ENCODE measurements at regions of chr16 and their contacts with region 1.

Region 1: DNA sequence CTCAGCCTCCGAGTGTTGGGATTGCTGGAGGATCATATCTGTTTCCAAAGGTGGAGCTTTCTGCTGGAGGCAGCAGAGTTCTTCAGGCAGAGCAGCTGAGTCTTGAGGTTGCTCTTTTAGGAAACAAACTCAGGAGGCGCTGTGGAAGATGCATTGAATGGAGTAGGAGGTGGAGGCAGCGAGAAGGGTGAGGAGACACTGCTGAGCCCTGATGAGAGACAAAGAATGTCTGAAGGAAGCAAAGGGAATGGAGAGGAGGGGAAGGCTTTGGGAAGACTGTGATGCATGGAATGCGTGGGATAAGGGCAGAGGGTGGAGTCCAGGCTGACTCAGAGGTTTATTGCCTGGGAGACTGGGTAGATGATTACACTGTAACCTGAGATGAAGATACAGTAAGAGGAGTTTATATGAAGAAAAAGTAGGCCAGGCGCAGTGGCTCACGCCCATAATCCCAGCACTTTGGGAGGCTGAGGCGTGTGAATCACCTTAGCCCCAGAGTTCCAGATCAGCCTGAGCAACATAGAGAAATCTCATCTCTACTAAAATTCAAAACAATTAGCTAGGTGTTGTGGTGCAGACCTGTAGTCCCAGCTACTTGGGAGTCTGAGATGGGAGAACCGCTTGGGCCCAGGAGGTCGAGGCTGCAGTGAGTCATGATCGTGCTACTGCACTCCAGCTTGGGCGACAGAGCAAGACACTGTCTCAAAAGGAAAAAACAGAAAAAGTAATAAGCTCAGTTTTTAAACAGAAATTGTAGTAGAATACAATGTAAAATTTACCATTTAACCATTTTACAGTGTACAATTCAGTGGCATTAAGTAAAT is 17.8 kb upstream of the TMEM219 start:
- DNase-seq: peak; percentile 96
- H3K4me3 ChIP-seq: peak overlapping the region; percentile 32; the same call in 1 of the 2 replicates
- H3K27ac ChIP-seq: peak overlapping the region; percentile 98
- H3K27me3 ChIP-seq: no peaks in the 10 kb centered on the region
- CTCF ChIP-seq: peak; percentile 55

Region 2: DNA sequence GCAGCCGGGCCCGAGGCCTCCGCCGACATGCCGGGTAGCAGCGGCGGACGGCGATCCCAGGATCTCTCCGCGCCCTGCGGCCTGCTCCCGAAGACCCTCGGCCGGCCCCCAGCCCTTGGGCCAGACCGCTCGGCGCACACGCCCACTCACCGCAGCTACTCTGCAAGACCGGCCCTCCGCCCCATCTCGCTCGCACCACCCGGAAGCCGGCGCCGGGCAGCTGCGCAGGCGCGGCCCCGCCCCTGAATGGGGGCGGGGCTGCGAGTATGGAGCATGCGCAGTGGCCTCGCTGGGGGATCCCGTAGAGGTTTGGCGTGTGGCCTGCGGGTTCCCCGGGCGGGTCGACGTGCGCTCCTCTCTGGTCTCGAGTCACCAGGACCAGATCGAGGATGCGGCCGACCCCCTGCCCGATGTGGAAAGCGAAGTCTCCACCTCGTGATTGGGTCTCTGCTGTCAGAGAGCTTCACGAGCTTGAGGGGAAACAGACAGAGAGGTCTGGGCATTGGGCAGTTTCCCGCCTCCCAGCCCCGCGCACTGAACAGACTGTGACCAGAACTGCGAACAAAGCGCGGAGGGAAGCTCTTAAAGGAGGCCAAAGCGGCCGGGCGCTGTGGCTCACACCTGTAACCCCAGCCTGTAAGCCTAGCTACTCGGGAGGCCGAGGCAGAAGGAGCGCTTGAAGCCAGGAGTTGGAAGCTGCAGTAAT is 17.9 kb before region 1 on chr16 and contains the start of gene KCTD13:
- CTCF ChIA-PET with region 1: interaction called, 7 read pairs
- POLR2A ChIA-PET with region 1: interaction called, 25 read pairs
- DNase-seq: peak; percentile 56
- H3K4me3 ChIP-seq: peak within 1 kb of the TSS; percentile 96
- H3K27ac ChIP-seq: peak within 1 kb of the TSS; percentile 73
- H3K27me3 ChIP-seq: no peaks in the 10 kb centered on the region
- CTCF ChIP-seq: no peak
- polyA plus RNA-seq, gene KCTD13: 7.4 and 8.8 TPM in 2 replicates

Region 3: DNA sequence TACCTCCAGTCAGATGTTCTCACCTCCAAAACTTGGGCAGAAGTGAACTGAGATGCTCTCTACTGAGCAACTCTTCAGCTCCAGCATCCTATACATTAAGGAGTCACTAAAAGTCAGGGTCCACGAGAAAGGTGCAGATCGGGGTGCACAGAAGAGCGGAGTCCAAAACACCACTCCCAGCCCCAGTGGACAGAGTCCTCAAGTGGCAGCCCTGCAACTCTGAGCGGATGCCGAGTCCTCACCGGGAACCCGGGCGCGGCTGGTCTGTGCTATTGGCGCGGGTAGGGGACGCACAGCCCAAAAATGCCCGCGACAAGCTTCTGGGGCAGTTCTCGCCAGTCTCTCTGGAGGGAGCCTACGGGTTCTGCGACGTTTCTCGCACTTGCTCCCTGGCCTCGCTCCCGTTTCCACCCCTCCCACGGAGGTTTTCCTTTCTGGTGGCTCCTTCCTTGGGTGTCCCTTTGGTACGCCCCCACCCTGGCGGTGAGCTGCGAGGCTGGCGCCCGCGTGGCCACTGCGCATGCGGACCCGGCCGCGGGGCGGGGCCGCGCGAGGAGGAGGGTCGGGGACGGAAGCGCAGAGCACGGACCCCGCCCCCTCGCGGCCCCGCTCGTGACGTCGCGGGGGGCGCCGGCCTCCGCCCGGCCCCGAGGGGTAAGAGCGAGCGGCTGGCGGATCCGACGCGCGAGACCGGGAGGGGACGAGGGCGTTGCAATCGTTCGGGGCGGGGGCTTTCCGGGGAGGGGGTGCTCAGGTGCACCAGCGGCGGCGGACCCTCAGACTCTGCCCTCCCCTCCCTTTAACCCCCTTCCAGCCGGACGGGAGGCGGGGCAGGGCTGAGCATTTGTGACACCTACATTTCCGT is 17.7 kb after region 1 on chr16 and contains the start of gene TMEM219:
- CTCF ChIA-PET with region 1: interaction called, 12 read pairs
- POLR2A ChIA-PET with region 1: interaction called, 6 read pairs
- DNase-seq: peak; percentile 54
- H3K4me3 ChIP-seq: peak within 1 kb of the TSS; percentile 77
- H3K27ac ChIP-seq: peak within 1 kb of the TSS; percentile 57
- H3K27me3 ChIP-seq: no peaks in the 10 kb centered on the region
- CTCF ChIP-seq: peak; percentile 48
- polyA plus RNA-seq, gene TMEM219: 88.6 and 107 TPM in 2 replicates

Region 4: DNA sequence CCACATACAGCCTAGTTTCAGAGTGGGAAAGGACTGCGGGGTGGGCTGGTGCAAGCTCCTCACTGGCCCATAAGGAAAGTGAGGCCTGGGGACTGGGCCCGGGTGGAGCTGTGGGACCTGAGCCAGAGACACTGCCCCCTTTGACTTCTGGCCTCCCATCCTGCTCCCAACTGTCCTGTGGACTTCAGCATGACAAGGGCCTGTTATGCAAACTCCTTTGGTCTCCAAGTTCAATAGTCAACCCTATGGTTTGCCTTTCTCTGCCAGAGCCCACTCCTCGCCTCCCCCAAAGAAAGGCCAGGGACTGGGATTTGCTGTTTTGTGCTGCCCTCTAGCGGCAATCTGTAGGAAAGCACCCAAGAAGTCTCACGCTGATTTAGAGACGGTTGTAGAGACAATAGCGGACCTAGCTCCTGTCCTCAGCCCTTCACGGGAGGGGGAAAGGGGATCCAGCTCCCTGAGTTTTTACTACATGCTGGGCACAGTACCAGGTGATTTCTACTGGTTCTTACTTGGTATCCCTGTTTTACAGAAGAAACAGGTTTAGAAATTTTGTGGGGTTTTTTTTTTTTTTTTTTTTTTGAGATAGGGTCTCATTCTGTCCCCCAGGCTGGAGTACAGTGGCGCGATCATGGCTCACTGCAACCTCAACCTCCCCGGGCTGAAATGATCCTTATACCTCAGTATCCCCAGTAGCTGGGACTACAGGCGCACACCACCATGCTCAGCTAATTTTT is 88.2 kb after region 1 on chr16:
- CTCF ChIA-PET with region 1: no interaction called
- POLR2A ChIA-PET with region 1: no interaction called
- DNase-seq: no peak
- H3K4me3 ChIP-seq: no peak overlapping the region
- H3K27ac ChIP-seq: no peak overlapping the region
- H3K27me3 ChIP-seq: peaks cover 49% of the 10 kb centered on the region
- CTCF ChIP-seq: peak; percentile 84

Region 5: DNA sequence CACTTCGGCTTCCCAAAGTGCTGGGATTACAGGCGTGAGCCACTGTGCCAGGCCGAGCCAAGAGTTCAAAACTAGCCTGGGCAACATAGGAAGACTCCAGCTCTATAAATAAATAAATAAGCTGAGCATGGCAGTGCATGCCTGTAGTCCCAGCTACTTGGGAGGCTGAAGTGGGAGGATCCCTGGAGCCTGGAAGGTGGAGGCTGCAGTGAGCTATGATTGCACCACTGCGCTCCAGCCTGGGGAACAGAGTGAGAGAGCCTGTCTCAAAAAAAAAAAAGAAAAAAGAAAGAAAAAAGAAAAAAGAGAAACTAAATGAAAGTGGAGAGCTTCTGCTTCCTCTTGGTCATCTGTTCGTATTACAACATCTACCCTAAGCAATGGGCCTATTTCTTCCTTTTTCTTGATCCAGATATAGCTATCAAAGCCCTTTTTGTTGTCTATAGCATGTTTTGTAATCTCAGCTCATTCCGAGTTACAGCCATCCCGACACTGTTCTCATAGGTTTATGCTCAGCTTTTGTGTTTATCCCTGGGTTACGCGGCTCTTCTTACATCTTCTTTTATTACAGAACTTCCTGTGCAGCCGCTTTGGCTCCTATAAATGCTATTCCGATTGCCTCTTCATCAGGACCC is 193.0 kb after region 1 on chr16:
- CTCF ChIA-PET with region 1: interaction called, 12 read pairs
- POLR2A ChIA-PET with region 1: no interaction called
- DNase-seq: no peak
- H3K4me3 ChIP-seq: no peak overlapping the region
- H3K27ac ChIP-seq: no peak overlapping the region
- H3K27me3 ChIP-seq: peaks cover 3% of the 10 kb centered on the region
- CTCF ChIP-seq: no peak

Measured in AG04450 (cell line).